Ovary (tissue), 10 donors: ENCODE measurements at regions of chr16 and their contacts with region 1.

Region 1: DNA sequence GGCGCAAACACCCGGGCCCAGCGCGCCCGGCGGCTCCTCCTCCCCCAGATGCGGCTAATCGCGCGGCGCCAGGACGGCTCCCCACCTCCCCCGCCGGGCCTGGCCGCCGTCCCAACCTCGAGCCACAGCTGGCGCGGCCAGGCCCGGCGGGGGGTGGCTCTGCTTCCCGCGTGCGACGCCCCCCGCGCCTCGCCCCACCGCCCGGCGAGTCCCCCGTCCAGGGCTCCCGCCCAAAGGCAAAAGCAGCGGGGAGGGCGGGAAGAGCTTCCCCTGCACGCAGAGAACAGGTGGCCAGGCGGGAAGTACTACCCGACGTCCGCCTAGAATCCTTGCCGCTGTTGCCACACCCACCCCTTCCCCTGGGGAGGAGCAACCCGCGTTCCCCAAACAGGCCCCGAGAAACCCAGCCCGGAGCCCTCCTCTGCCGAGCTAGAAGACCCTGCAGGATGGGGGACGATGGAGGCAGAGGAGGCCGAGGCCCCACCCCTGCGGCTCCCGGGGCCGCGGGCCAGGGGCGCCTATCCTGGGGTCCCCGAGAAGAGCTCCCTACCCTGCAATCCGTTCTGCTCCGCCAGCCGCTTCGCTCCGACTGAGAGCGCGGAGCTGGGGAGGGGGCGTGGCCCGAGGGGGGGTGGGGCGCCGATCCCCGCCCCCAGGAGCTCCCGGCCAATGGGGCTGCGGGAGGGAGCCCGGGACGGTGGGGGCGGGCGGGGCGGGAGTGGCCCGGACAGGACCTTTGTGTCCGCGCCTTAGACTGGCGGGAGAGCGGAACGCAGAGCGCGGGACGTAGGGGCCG is at the start of gene CARHSP1:
- DNase-seq: peak; percentile 85 to 93 (median 91)
- H3K4me3 ChIP-seq: peak within 1 kb of the TSS; percentile 81
- H3K27ac ChIP-seq: peak within 1 kb of the TSS; percentile 77 to 88
- H3K4me1 ChIP-seq: peaks cover 18% of the 10 kb centered on the region
- H3K27me3 ChIP-seq: no peaks in the 10 kb centered on the region
- CTCF ChIP-seq: no peak
- EP300 ChIP-seq: no peak
- POLR2A ChIP-seq: peak; percentile 51
- total RNA-seq, gene CARHSP1: 65.0 to 94.3 (median 81.7) TPM

Region 2: DNA sequence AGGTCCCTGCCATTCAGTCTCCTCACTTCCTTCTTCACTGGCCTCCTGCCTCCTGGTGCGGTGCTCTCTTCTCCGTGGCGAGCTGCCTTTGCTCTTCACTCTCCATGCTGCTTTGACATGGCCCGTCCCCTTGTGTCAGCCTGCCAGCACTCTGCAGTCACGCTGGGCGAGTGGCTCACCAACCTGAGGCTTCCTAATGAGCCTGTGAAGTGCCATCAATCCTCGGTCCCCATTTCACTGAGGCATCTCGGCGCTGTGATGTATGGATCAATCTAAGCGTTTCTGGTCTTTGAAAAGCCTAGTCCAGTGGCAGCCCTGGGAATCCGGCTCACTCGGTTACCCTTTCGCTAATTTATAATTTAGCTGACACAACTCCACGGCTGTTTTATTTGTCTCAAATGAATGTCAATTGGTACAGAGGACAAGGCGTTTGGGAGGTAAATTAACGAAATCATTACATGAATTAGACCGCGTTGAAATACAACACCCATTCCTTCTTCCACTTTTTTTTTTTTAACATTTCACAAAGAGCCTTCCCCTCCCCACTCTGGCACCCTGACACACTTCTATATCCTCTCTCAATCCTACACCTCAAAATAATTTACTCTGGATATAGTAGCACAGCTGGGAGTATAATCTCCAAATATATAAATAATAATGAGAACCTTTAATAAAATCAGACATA is 889.0 kb before region 1 on chr16:
- intact Hi-C with region 1: no loop called
- DNase-seq: no peak
- H3K4me3 ChIP-seq: no peak overlapping the region
- H3K27ac ChIP-seq: no peak overlapping the region
- H3K4me1 ChIP-seq: no peaks in the 10 kb centered on the region
- H3K27me3 ChIP-seq: no peaks in the 10 kb centered on the region
- CTCF ChIP-seq: no peak
- EP300 ChIP-seq: no peak
- POLR2A ChIP-seq: no peak

Region 3: DNA sequence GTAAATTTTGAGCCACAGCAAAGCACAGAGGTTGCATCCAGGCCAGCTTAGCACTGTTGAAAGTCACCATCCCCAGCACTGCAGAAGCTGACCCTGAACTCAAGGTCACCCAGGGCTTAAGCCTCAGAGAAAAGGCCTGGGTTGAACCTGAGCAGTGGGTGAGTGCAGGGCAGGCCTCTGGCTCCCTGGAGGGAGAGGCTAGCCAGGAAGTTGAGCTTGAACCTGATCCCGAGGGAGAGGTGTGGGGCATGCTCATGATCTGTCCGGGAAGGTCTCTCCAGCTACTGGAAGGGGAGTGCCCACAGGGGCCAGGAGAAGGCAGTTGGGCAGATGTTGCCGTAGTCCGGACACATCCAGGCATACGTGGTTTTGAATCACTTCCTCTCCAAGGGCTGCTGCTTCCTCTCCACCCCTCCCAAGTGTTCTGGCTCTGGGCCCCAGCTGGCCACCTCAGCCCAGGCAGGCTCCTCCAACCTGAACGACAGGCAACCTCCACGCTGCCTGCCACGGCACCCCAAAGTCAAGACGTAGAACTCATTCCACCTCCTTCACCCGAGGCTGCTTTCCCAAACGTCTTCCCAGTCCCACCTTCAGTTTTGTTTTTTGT is 18.2 kb before region 1 on chr16:
- intact Hi-C with region 1: no loop called
- DNase-seq: peak in 2 of 5 donors; percentile 55 to 64
- H3K4me3 ChIP-seq: no peak overlapping the region
- H3K27ac ChIP-seq: peak overlapping the region in 1 of 2 donors; percentile 42
- H3K4me1 ChIP-seq: peaks cover 10% of the 10 kb centered on the region
- H3K27me3 ChIP-seq: no peaks in the 10 kb centered on the region
- CTCF ChIP-seq: no peak
- EP300 ChIP-seq: no peak
- POLR2A ChIP-seq: no peak

Region 4: DNA sequence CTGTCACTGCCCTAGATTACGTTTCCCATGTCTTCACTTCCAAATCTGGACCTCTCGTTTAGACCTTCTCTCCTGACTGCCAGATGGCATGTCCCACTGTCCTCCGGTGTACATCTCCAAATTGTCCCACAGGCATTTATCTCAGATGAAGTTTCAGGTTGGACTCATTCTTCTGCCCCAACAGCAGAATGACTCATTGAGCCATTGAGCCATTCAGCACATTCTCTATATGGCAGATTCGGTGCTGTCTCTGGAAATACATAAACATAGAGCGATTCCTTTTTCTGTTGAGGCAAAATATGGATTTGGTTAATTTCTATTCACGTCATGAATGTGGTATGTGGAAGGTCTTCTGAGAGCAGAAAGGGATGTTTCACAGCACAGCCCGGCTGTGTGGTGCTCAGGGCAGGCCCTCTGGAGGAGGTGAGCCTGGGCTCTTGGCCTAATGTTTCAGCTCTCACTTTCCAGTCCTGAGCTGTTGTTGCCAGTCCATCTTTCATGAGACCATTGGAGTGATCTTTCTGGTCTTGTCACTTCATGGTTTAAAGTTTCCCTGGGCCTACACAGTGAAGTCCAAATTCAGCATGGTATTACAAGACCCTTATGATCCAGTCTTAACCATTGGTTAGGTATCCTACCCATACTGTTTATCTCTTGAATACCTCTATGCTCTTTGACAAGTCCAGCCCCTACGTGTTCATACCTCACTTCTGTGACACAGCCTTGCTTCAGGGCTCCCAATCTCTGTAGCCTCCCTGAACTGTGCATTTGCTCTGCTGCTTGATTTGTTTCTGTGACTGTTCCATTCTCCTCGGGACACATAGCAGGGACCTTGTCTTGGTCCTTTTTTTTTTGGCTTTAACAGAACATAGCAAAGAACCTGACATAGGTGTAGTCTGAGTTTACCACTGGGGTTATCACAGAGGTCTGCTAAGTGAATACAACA is 238.7 kb after region 1 on chr16:
- intact Hi-C with region 1: loop called in 1 of 4 experiments (anchors 5 kb)
- DNase-seq: no peak
- H3K4me3 ChIP-seq: no peak overlapping the region
- H3K27ac ChIP-seq: no peak overlapping the region
- H3K4me1 ChIP-seq: peaks cover 26% of the 10 kb centered on the region
- H3K27me3 ChIP-seq: no peaks in the 10 kb centered on the region
- CTCF ChIP-seq: no peak
- EP300 ChIP-seq: no peak
- POLR2A ChIP-seq: no peak